ENCODE measurements at regions of chr12 and their contacts with region 1.

Region 1: GRCh38 chr12:99911081-99911480 is 73.7 kb downstream of the ANKS1B start:
- DNase-seq: peak; percentile 91
- H3K4me3 Mint-ChIP-seq: peak overlapping the region; percentile 47
- H3K27ac Mint-ChIP-seq: peak overlapping the region; percentile 83
- H3K4me1 Mint-ChIP-seq: peaks cover 59% of the 10 kb centered on the region
- H3K27me3 Mint-ChIP-seq: no peaks in the 10 kb centered on the region
- CTCF ChIP-seq: no peak

Region 2: GRCh38 chr12:98845957-98846356 is 1065.1 kb before region 1 on chr12:
- CTCF ChIA-PET with region 1: no interaction called
- POLR2A ChIA-PET with region 1: no interaction called
- intact Hi-C with region 1: no loop called
- DNase-seq: no peak
- H3K4me3 Mint-ChIP-seq: no peak overlapping the region
- H3K27ac Mint-ChIP-seq: no peak overlapping the region
- H3K4me1 Mint-ChIP-seq: no peaks in the 10 kb centered on the region
- H3K27me3 Mint-ChIP-seq: no peaks in the 10 kb centered on the region
- CTCF ChIP-seq: no peak

Region 3: DNA sequence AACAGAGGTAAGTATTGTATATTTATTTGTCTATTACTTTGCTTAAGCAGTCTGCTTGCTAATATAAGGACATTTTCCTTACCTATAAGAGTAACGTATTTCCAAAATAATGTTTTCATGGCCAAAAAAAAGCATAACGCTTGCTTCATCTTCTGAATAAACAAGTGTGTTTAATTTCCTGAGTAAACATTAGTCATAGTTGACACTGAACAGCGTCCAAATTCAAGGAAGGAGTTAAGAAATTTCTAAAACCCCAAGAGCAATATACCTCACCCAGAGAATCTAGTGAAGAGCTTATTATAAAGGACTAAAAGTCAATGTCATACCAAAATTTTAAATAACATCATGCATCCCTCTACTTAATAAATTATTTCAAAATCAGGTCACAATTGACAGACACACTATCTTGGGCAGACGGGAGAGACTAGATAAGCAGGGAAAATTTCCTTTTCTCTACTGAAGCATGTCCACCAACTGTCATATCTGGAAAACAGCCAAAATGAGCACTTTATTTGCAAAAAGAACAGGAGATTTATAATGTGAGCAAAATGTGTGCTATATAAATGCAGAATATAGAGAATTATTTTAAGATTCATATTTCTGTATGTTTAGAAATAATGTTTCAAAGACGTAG is 48.6 kb after region 1 on chr12:
- CTCF ChIA-PET with region 1: interaction called, 4 read pairs
- POLR2A ChIA-PET with region 1: interaction called, 11 read pairs
- intact Hi-C with region 1: loop called (anchors 5 kb)
- DNase-seq: peak; percentile 90
- H3K4me3 Mint-ChIP-seq: no peak overlapping the region
- H3K27ac Mint-ChIP-seq: no peak overlapping the region
- H3K4me1 Mint-ChIP-seq: peaks cover 16% of the 10 kb centered on the region
- H3K27me3 Mint-ChIP-seq: no peaks in the 10 kb centered on the region
- CTCF ChIP-seq: no peak

Region 4: GRCh38 chr12:99977550-99977949 is 66.5 kb after region 1 on chr12:
- CTCF ChIA-PET with region 1: interaction called, 3 read pairs
- POLR2A ChIA-PET with region 1: interaction called, 10 read pairs
- intact Hi-C with region 1: loop called (anchors 5 kb)
- DNase-seq: peak; percentile 60
- H3K4me3 Mint-ChIP-seq: no peak overlapping the region
- H3K27ac Mint-ChIP-seq: peak overlapping the region; percentile 59
- H3K4me1 Mint-ChIP-seq: peaks cover 33% of the 10 kb centered on the region
- H3K27me3 Mint-ChIP-seq: no peaks in the 10 kb centered on the region
- CTCF ChIP-seq: no peak

Region 5: GRCh38 chr12:99984271-99985128 is 73.4 kb after region 1 on chr12 and contains the start of gene ANKS1B:
- CTCF ChIA-PET with region 1: interaction called, 4 read pairs
- POLR2A ChIA-PET with region 1: interaction called, 9 read pairs
- intact Hi-C with region 1: loop called (anchors 5 kb)
- DNase-seq: peak; percentile 79
- H3K4me3 Mint-ChIP-seq: peak within 1 kb of the TSS; percentile 89
- H3K27ac Mint-ChIP-seq: peak within 1 kb of the TSS; percentile 16
- H3K4me1 Mint-ChIP-seq: peaks cover 20% of the 10 kb centered on the region
- H3K27me3 Mint-ChIP-seq: no peaks in the 10 kb centered on the region
- CTCF ChIP-seq: no peak
- total RNA-seq, gene ANKS1B: 17.7 and 18.8 TPM in 2 replicates

Measured in MCF 10A (cell line).